Ascending aorta (tissue), 2 donors: ENCODE measurements at regions of chr19 and their contacts with region 1.

Region 1: DNA sequence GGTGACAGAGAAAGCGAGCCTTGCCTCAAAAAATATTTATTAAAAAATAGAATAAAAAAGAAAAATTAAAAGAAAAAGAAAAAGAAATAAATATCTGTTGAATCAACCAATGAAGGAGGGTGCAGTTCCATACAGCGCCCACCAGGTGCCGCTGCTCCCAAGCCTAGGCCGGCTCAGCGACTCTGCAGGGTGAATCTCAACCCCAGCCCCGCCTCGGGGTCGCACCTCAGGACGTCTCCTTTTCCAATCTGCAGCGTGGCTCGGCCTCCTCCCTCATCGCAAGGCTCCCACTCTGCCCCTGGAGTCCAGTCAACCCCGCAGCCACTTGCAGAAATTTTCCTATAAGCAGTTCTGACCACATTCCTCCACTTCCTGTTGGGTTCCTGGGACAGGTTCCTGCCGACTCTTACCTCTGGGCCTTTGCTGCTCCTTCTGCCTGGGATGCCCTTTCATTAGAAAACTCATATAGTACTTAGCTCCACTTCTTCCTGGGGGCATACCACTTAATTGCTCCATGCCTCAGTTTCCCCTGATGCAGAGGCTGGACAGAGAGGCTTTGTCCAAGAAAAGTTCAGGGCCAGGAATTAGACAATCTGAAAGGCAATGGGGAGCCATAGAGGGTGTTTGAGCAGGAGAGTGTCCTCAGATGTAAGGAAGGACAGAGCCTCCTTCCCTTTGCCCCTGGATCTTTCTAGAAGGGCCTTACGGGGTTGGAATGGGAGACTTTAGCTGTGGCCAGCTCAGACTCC is 24.3 kb downstream of the NFILZ start:
- DNase-seq: no peak
- H3K4me3 ChIP-seq: peak overlapping the region in 1 of 2 donors; percentile 30
- H3K27ac ChIP-seq: no peak overlapping the region
- H3K4me1 ChIP-seq: no peaks in the 10 kb centered on the region
- H3K27me3 ChIP-seq: no peaks in the 10 kb centered on the region
- CTCF ChIP-seq: peak; percentile 79 to 100 (median 98)

Region 2: DNA sequence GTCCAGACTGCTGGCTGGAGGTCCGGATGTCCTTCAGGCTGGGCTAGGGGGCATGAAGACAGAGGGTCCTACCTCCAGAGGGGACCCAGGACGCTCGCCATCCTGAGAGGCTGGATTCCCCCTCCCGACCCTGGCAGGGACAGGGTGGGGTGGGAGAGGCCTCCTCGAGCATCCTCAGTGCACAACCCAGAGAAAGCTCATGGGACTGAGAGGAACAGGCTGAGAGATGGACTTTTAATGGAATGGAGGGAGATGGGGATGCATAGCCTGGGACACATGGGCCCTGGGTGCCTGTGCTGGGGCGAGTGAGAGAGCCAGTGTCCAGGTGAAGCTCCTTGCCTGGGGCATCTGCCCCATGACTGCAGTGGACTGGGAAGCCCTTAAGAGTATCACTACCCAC is 40.7 kb after region 1 on chr19:
- intact Hi-C with region 1: loop called (anchors 2 kb)
- DNase-seq: no peak
- H3K4me3 ChIP-seq: no peak overlapping the region
- H3K27ac ChIP-seq: no peak overlapping the region
- H3K4me1 ChIP-seq: no peaks in the 10 kb centered on the region
- H3K27me3 ChIP-seq: no peaks in the 10 kb centered on the region
- CTCF ChIP-seq: no peak

Region 3: DNA sequence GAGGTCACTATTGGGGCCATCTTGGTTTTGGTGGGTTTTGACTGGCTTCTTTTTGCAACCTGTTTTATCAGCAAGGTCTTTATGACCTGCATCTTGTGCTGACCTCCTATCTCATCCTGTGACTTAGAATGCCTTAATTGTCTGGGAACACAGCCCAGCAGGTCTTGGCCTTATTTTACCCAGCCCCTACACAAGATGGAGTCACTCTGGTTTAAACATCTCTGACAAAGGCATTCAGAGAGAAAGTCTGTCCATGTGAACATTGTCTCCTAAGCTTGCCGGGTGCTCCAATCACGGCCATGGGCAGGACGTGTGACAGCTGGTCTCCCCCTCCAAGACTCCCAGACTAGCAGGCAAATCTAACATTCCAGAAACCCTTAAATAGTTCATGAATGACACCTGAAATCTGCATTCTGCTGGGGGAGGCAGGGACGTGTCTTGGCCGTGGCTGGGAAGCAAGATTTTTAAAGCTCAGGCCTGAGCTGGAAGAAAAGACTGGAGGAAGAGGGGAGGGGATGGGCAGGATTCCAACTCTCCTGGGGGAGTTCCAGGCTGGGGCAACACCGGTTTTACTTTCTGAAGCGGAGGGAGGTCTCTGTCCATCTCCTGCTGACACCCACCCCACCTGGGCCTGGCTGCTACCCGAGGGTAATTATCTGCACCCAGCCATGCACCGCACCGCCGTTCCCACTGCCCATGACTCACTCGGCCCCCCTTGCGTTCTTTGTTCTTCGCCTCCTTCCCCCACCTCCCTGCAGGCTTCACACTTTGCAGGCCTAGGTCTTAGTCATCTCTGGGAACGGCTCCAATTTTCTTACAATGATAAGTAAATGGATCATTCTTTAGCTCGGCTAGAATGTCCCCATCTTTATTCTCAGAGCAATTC is 420.5 kb after region 1 on chr19:
- intact Hi-C with region 1: loop called (anchors 2 kb)
- DNase-seq: peak in 1 of 2 donors; percentile 71
- H3K4me3 ChIP-seq: peak overlapping the region in 1 of 2 donors; percentile 25
- H3K27ac ChIP-seq: no peak overlapping the region
- H3K4me1 ChIP-seq: peaks cover 0 to 2% of the 10 kb centered on the region in 2 donors
- H3K27me3 ChIP-seq: no peaks in the 10 kb centered on the region
- CTCF ChIP-seq: no peak